ENCODE measurements at regions of chr18 and their contacts with region 1.

Region 1: DNA sequence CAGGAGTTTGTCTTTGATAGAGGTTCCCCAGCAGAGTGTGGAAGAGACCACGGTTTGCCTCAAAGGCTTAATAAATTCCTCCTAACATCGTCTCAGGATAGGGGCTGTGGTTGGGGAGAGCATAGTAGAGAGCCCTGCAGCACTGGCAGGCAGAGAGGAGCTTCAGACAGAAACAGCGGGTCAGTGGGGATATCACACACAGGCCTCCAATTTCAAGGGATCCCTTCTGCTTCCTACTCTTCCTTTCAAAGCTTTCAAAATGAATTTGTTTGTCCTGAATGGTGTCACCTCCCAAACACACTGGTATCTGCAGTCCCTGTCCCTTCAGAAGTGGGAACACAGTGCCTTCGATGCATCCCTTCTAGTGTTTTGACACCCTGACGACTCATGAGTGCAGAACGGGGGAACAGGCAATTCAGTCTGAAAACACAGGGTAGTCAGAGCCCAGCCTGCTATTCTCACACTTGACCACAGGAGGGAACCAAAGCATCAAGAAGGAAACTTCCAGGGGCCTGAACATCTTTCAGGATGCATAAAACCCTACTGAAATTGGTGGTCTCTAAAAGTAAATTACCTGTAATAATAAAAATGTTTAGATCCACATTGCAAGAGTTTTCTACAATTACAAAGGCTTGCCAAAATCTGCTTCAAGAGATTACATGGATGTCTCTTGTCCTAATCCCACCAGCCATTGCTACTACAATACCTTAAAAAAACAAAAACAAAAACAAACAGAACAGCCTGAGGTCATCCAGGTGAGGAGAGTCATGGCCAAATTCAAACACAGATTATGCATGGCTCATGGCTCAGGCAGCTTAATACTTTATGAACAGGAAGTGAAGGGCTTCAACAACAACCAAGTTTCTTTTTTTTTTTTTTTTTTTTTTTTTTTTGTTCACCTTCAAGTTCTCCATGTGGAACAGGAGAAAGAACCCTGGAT is 49.8 kb downstream of the SLC14A2 start:
- DNase-seq: peak; percentile 37 to 83 (median 70)
- ATAC-seq: peak; percentile 83
- H3K4me3 ChIP-seq: no peak overlapping the region
- H3K4me3 Mint-ChIP-seq: peak overlapping the region; percentile 50
- H3K27ac ChIP-seq: peak overlapping the region in 1 of 2 experiments; percentile 46
- H3K27ac Mint-ChIP-seq: peak overlapping the region; percentile 74
- H3K4me1 ChIP-seq: peaks cover 51% of the 10 kb centered on the region
- H3K4me1 Mint-ChIP-seq: peaks cover 56% of the 10 kb centered on the region
- H3K27me3 ChIP-seq: no peaks in the 10 kb centered on the region
- H3K27me3 Mint-ChIP-seq: no peaks in the 10 kb centered on the region
- CTCF ChIP-seq: peak; percentile 92

Region 2: GRCh38 chr18:45677276-45677807 is 12.2 kb after region 1 on chr18:
- CTCF ChIA-PET with region 1: interaction called, 54 read pairs
- POLR2A ChIA-PET with region 1: interaction called, 5 read pairs
- intact Hi-C with region 1: no loop called
- DNase-seq: peak in 1 of 9 experiments; percentile 31
- ATAC-seq: no peak
- H3K4me3 ChIP-seq: no peak overlapping the region
- H3K4me3 Mint-ChIP-seq: no peak overlapping the region
- H3K27ac ChIP-seq: no peak overlapping the region
- H3K27ac Mint-ChIP-seq: no peak overlapping the region
- H3K4me1 ChIP-seq: no peaks in the 10 kb centered on the region
- H3K4me1 Mint-ChIP-seq: peaks cover 3% of the 10 kb centered on the region
- H3K27me3 ChIP-seq: no peaks in the 10 kb centered on the region
- H3K27me3 Mint-ChIP-seq: no peaks in the 10 kb centered on the region
- CTCF ChIP-seq: no peak

Region 3: GRCh38 chr18:45690975-45691815 is 26.1 kb after region 1 on chr18:
- CTCF ChIA-PET with region 1: interaction called, 209 read pairs
- POLR2A ChIA-PET with region 1: interaction called, 53 read pairs
- intact Hi-C with region 1: loop called (anchors 1 kb)
- DNase-seq: peak; percentile 58 to 88 (median 82)
- ATAC-seq: no peak
- H3K4me3 ChIP-seq: no peak overlapping the region
- H3K4me3 Mint-ChIP-seq: peak overlapping the region; percentile 35
- H3K27ac ChIP-seq: no peak overlapping the region
- H3K27ac Mint-ChIP-seq: no peak overlapping the region
- H3K4me1 ChIP-seq: peaks cover 49% of the 10 kb centered on the region
- H3K4me1 Mint-ChIP-seq: peaks cover 47% of the 10 kb centered on the region
- H3K27me3 ChIP-seq: no peaks in the 10 kb centered on the region
- H3K27me3 Mint-ChIP-seq: peaks cover 2% of the 10 kb centered on the region
- CTCF ChIP-seq: peak; percentile 81

Region 4: DNA sequence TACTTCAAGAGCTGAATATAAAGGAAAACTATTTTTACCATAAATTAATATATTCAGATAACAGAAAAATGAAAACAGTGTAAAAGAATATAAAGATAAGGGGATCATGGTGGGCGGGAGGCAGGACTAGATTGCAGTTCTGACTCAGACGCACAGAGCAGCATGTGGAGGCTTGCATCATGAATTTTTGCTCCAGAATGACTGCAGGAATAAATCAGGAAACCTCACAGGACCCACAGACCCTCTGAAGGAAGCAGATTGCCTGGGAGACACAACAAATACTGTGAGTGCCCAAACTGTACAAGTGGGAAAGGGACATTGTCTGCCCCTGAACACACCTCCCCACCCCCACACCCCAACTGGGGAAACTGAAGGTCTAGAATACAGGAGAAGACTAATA is 141.1 kb after region 1 on chr18:
- CTCF ChIA-PET with region 1: interaction called, 16 read pairs
- POLR2A ChIA-PET with region 1: no interaction called
- intact Hi-C with region 1: no loop called
- DNase-seq: no peak
- ATAC-seq: no peak
- H3K4me3 ChIP-seq: no peak overlapping the region
- H3K4me3 Mint-ChIP-seq: no peak overlapping the region
- H3K27ac ChIP-seq: no peak overlapping the region
- H3K27ac Mint-ChIP-seq: no peak overlapping the region
- H3K4me1 ChIP-seq: no peaks in the 10 kb centered on the region
- H3K4me1 Mint-ChIP-seq: peaks cover 11% of the 10 kb centered on the region
- H3K27me3 ChIP-seq: no peaks in the 10 kb centered on the region
- H3K27me3 Mint-ChIP-seq: peaks cover 7% of the 10 kb centered on the region
- CTCF ChIP-seq: no peak

Region 5: DNA sequence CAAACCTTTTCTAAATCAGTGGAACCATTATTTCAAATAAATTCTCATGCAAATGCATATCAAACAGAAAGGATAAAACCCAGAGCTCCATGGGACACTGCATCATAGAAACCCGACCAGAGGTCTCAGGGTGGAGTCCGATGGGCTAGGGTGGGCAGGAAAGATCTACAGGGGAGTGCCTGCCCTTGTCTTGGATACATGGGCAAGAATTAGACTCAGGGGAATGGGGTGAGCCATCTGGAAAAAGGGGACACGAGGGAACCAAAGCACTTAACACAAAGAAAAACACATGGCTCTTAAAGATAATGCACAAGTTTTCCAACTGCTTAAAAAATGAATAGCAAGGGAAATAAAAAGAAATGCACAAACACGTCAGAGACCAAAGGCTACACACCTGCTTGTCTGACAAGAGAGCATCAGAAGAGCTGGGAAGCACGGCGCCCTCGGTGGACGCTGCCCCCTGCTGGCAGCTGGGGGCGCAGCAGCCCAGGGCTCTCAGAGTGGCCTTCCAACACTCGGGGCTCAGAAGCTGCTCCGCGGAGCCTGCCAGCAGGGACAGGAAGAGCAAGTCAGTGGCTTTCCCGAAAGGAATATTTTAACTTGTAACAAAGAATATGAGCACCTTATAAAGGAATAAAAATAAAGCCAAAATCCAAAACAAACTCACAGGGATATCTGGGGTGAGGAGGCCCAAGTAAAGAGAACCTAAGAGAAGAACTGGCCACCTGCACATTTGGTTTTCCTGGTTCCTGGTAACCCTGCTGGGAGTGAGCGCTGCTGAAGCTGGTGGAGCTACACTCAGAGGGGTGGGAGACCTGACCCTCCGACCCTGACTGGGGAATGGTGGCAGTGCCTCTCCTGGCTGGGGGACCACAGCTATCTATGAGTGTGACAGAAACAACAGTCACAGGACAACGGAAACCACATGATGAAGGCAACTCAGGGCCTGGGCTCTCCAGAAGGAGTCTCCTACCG is 214.9 kb after region 1 on chr18:
- CTCF ChIA-PET with region 1: interaction called, 192 read pairs
- POLR2A ChIA-PET with region 1: interaction called, 17 read pairs
- intact Hi-C with region 1: loop called (anchors 1 kb)
- DNase-seq: peak; percentile 53 to 86 (median 69)
- ATAC-seq: peak; percentile 98
- H3K4me3 ChIP-seq: no peak overlapping the region
- H3K4me3 Mint-ChIP-seq: no peak overlapping the region
- H3K27ac ChIP-seq: no peak overlapping the region
- H3K27ac Mint-ChIP-seq: peak overlapping the region; percentile 69
- H3K4me1 ChIP-seq: peaks cover 7% of the 10 kb centered on the region
- H3K4me1 Mint-ChIP-seq: peaks cover 15% of the 10 kb centered on the region
- H3K27me3 ChIP-seq: no peaks in the 10 kb centered on the region
- H3K27me3 Mint-ChIP-seq: no peaks in the 10 kb centered on the region
- CTCF ChIP-seq: peak; percentile 99

Region 6: GRCh38 chr18:45974088-45974536 is 309.0 kb after region 1 on chr18:
- CTCF ChIA-PET with region 1: interaction called, 23 read pairs
- POLR2A ChIA-PET with region 1: interaction called, 6 read pairs
- intact Hi-C with region 1: loop called (anchors 1 to 5 kb)
- DNase-seq: peak; percentile 39 to 81 (median 63)
- ATAC-seq: peak; percentile 83
- H3K4me3 ChIP-seq: no peak overlapping the region
- H3K4me3 Mint-ChIP-seq: no peak overlapping the region
- H3K27ac ChIP-seq: no peak overlapping the region
- H3K27ac Mint-ChIP-seq: no peak overlapping the region
- H3K4me1 ChIP-seq: peaks cover 7% of the 10 kb centered on the region
- H3K4me1 Mint-ChIP-seq: peaks cover 6% of the 10 kb centered on the region
- H3K27me3 ChIP-seq: no peaks in the 10 kb centered on the region
- H3K27me3 Mint-ChIP-seq: no peaks in the 10 kb centered on the region
- CTCF ChIP-seq: peak; percentile 86

Measured in CD8-positive, alpha-beta T cell (primary cell).